ENCODE measurements at regions of chr1 and their contacts with region 1.

Region 1: DNA sequence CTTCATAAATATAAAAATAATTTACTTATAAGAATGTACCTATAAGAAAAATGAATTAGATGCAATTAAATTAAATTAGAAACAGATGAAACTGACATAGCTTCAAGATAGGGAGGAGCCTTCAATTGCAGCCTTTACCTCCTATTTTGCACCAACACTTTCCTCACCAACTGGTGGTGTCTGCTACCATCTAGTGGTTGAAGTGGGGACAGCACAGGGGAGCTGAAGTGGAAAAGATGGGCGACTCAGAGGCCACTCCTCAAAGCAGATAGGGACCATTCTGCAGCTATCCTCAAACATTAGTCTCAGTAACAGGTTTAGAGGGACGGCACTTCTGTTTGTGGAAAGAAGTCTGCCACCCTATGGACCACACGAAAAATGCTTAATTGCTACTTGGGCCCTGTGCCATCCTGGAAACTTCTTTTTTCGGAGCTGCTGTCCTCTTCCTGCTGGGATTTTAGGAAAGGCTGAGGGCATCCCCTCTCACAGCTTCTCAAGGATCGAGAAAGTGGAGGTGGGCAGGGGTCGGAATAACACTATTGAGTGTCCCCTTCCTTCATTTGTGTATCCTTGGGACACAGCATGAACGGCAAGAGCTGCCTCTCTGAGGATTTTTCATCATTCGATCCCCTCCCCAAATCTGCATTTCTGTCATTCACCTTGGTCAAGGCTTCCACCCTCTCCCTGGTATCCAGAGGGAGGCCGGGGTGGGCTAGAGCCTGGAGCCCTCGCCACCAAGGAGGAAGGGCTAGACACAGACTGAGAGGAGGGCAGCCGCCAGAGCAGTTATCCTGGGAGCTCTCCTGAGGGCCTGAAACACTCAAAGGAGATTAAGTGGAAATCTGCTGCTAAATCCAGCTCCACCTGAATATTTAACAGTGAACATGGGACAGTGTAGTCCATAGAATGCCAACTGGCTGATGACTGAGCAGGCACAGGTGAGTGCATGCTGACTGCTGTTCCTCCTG is 9.6 kb downstream of the PROK1 start:
- DNase-seq: peak; percentile 73 to 86 (median 76)
- H3K4me3 ChIP-seq: no peak overlapping the region
- H3K4me3 Mint-ChIP-seq: no peak overlapping the region
- H3K27ac ChIP-seq: no peak overlapping the region
- H3K27ac Mint-ChIP-seq: peak overlapping the region in 1 of 8 donors; percentile 23
- H3K4me1 ChIP-seq: no peaks in the 10 kb centered on the region
- H3K4me1 Mint-ChIP-seq: no peaks in the 10 kb centered on the region
- H3K27me3 ChIP-seq: no peaks in the 10 kb centered on the region
- H3K27me3 Mint-ChIP-seq: peaks cover 0 to 4% of the 10 kb centered on the region in 2 donors

Region 2: DNA sequence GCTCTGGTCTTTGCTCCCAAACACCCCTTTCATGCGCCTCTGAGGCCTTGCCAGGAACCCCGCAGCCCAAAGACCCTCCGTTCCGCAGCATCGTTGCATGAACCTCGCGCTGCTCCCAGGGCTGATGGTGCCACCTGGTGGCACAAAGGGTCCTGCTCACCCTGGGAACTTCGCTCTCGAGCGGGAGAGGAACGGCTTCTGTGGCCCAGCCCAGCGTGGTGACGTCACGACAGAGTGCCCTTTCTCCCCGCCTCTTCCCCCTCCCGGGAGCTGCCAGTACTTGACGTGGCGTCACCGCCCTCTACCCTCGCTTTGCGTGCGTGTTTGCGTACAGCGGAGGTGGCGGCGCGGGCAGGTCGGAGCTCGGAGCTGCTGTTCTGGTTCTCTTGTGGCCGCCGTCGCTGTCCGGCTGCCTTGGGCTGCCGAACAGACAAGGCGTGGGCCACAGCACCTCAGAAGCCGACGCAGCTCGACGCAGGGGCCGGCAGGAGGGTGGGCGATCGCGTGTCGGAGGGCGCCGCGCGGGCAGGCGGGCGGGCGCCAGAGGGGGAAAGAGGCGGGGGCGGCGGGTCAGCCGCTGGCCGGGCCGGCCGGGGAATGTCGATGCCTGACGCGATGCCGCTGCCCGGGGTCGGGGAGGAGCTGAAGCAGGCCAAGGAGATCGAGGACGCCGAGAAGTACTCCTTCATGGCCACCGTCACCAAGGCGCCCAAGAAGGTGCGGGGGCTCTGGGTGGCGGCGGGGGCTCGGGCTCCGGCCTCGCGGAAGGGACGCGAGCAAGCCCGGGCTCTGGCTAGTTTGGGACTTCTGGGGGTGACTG is 475.9 kb before region 1 on chr1 and contains the start of gene AHCYL1:
- CTCF ChIA-PET with region 1: no interaction called
- POLR2A ChIA-PET with region 1: no interaction called
- DNase-seq: peak; percentile 98 to 99 (median 99)
- H3K4me3 ChIP-seq: peak within 1 kb of the TSS; percentile 75
- H3K4me3 Mint-ChIP-seq: peak within 1 kb of the TSS; percentile 92 to 99 (median 97)
- H3K27ac ChIP-seq: peak within 1 kb of the TSS; percentile 77
- H3K27ac Mint-ChIP-seq: peak within 1 kb of the TSS; percentile 68 to 100 (median 99)
- H3K4me1 ChIP-seq: peaks cover 36% of the 10 kb centered on the region
- H3K4me1 Mint-ChIP-seq: peaks cover 38 to 46% (median 44%) of the 10 kb centered on the region in 3 donors
- H3K27me3 ChIP-seq: no peaks in the 10 kb centered on the region
- H3K27me3 Mint-ChIP-seq: peaks cover 0 to 2% of the 10 kb centered on the region in 2 donors
- total RNA-seq, gene AHCYL1: 56.9 to 59.9 TPM

Region 3: GRCh38 chr1:110196917-110197765 is 263.4 kb before region 1 on chr1:
- CTCF ChIA-PET with region 1: interaction called, 124 read pairs
- POLR2A ChIA-PET with region 1: no interaction called
- DNase-seq: peak; percentile 32 to 66 (median 47)
- H3K4me3 ChIP-seq: no peak overlapping the region
- H3K4me3 Mint-ChIP-seq: no peak overlapping the region
- H3K27ac ChIP-seq: no peak overlapping the region
- H3K27ac Mint-ChIP-seq: no peak overlapping the region
- H3K4me1 ChIP-seq: no peaks in the 10 kb centered on the region
- H3K4me1 Mint-ChIP-seq: peaks cover 0 to 2% (median 0%) of the 10 kb centered on the region in 3 donors
- H3K27me3 ChIP-seq: no peaks in the 10 kb centered on the region
- H3K27me3 Mint-ChIP-seq: no peaks in the 10 kb centered on the region

Region 4: GRCh38 chr1:110203021-110203661 is 257.4 kb before region 1 on chr1:
- CTCF ChIA-PET with region 1: interaction called, 124 read pairs
- POLR2A ChIA-PET with region 1: interaction called, 5 read pairs
- DNase-seq: peak; percentile 38 to 75 (median 67)
- H3K4me3 ChIP-seq: no peak overlapping the region
- H3K4me3 Mint-ChIP-seq: peak overlapping the region in 1 of 7 donors; percentile 32
- H3K27ac ChIP-seq: no peak overlapping the region
- H3K27ac Mint-ChIP-seq: peak overlapping the region; percentile 14 to 86 (median 74)
- H3K4me1 ChIP-seq: peaks cover 20% of the 10 kb centered on the region
- H3K4me1 Mint-ChIP-seq: peaks cover 14 to 26% (median 24%) of the 10 kb centered on the region in 3 donors
- H3K27me3 ChIP-seq: no peaks in the 10 kb centered on the region
- H3K27me3 Mint-ChIP-seq: peaks cover 0 to 2% of the 10 kb centered on the region in 2 donors

Region 5: GRCh38 chr1:110312188-110313121 is 148.1 kb before region 1 on chr1:
- CTCF ChIA-PET with region 1: interaction called, 17 read pairs
- POLR2A ChIA-PET with region 1: interaction called, 5 read pairs
- DNase-seq: peak; percentile 57 to 82 (median 62)
- H3K4me3 ChIP-seq: no peak overlapping the region
- H3K4me3 Mint-ChIP-seq: peak overlapping the region in 1 of 7 donors; percentile 54
- H3K27ac ChIP-seq: no peak overlapping the region
- H3K27ac Mint-ChIP-seq: no peak overlapping the region
- H3K4me1 ChIP-seq: no peaks in the 10 kb centered on the region
- H3K4me1 Mint-ChIP-seq: peaks cover 0 to 2% (median 0%) of the 10 kb centered on the region in 3 donors
- H3K27me3 ChIP-seq: no peaks in the 10 kb centered on the region
- H3K27me3 Mint-ChIP-seq: peaks cover 0 to 2% of the 10 kb centered on the region in 2 donors

Region 6: GRCh38 chr1:110338886-110339406 is 121.6 kb before region 1 on chr1 and contains the start of gene RBM15:
- CTCF ChIA-PET with region 1: interaction called, 18 read pairs
- POLR2A ChIA-PET with region 1: no interaction called
- DNase-seq: peak; percentile 93 to 99 (median 99)
- H3K4me3 ChIP-seq: peak within 1 kb of the TSS; percentile 80
- H3K4me3 Mint-ChIP-seq: no peak within 1 kb of the TSS
- H3K27ac ChIP-seq: peak within 1 kb of the TSS; percentile 97
- H3K27ac Mint-ChIP-seq: peak within 1 kb of the TSS in 2 of 8 donors; percentile 98
- H3K4me1 ChIP-seq: peaks cover 48% of the 10 kb centered on the region
- H3K4me1 Mint-ChIP-seq: peaks cover 53 to 63% (median 62%) of the 10 kb centered on the region in 3 donors
- H3K27me3 ChIP-seq: no peaks in the 10 kb centered on the region
- H3K27me3 Mint-ChIP-seq: no peaks in the 10 kb centered on the region
- total RNA-seq, gene RBM15: 53.9 to 54.0 TPM

Region 7: GRCh38 chr1:110360431-110360830 is 100.1 kb before region 1 on chr1:
- CTCF ChIA-PET with region 1: no interaction called
- POLR2A ChIA-PET with region 1: no interaction called
- DNase-seq: no peak
- H3K4me3 ChIP-seq: no peak overlapping the region
- H3K4me3 Mint-ChIP-seq: no peak overlapping the region
- H3K27ac ChIP-seq: no peak overlapping the region
- H3K27ac Mint-ChIP-seq: peak overlapping the region in 1 of 8 donors; percentile 64
- H3K4me1 ChIP-seq: no peaks in the 10 kb centered on the region
- H3K4me1 Mint-ChIP-seq: peaks cover 23 to 43% (median 38%) of the 10 kb centered on the region in 3 donors
- H3K27me3 ChIP-seq: no peaks in the 10 kb centered on the region
- H3K27me3 Mint-ChIP-seq: no peaks in the 10 kb centered on the region

Region 8: DNA sequence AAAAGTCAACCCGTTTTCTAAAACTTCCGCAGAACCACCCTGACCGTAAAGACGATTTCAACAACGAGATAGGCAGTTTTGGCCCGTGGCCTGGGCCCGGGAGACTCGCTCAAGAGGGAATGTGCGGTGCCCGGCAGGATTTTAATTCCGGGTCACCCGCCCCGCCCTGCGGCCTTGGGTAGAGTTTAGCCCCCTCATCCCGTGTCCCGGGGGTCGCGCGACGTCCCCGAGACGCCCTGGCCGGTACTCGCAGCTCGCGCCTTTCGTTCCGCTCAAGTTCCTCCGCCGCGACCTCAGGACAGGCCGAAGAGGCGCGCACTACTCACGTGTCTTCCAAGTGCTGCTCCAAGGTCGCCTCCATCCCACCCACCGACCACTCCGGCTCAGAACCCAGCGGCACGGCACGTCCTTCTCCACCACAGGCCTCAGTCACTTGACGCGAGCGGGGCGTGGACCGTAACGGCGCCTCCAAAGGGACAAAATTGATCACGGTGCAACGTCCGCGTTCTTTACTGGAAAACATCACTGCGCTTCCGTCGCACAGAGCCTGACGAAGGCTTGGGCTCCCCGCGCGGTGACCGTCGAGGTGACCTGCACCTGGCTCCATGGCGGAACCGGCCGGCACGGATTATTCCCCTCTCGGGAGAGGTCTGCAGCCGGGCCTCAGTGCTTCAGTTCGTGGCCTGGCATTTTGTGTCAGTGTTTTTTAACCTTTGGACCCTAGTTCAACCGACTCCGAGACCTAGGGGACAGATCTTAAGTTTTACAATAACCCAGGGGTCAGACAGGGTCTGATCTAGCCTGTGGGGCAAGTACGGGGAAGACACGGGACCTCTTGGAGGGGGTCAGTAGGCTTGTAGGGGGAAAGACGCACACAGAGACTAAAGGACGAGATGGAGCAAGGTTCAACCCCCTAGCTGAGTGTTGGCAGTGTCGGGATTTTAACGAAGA is 53.0 kb before region 1 on chr1 and contains the start of gene LAMTOR5:
- CTCF ChIA-PET with region 1: interaction called, 27 read pairs
- POLR2A ChIA-PET with region 1: no interaction called
- DNase-seq: peak; percentile 85 to 93 (median 87)
- H3K4me3 ChIP-seq: peak within 1 kb of the TSS; percentile 100
- H3K4me3 Mint-ChIP-seq: peak within 1 kb of the TSS; percentile 95 to 100 (median 99)
- H3K27ac ChIP-seq: peak within 1 kb of the TSS; percentile 97
- H3K27ac Mint-ChIP-seq: peak within 1 kb of the TSS; percentile 90 to 100 (median 99)
- H3K4me1 ChIP-seq: peaks cover 22% of the 10 kb centered on the region
- H3K4me1 Mint-ChIP-seq: peaks cover 24 to 33% (median 31%) of the 10 kb centered on the region in 3 donors
- H3K27me3 ChIP-seq: no peaks in the 10 kb centered on the region
- H3K27me3 Mint-ChIP-seq: no peaks in the 10 kb centered on the region
- total RNA-seq, gene LAMTOR5: 148 to 157 TPM

Region 9: DNA sequence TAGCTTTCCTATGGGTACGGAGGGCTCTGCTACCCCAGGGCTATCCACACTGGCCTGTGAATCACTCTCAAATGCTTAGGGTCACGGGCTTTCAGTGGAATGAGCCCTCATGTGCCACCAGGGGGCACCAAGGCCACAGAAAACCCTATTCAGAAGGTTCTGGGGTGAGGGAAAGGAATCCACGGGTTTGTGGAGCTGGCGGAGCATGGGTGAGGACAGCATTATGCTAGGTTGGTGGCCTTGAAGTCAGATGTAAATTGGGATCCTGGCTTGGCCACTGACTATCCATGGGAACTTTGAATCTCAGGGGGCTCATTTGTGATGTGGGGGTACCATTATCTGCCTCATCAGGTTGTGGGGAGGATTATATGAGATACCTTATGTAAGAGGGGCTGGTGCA is 48.0 kb before region 1 on chr1:
- CTCF ChIA-PET with region 1: interaction called, 27 read pairs
- POLR2A ChIA-PET with region 1: no interaction called
- DNase-seq: peak; percentile 26 to 67 (median 41)
- H3K4me3 ChIP-seq: no peak overlapping the region
- H3K4me3 Mint-ChIP-seq: peak overlapping the region in 1 of 7 donors; percentile 23
- H3K27ac ChIP-seq: peak overlapping the region; percentile 25
- H3K27ac Mint-ChIP-seq: peak overlapping the region in 3 of 8 donors; percentile 2 to 68 (median 63)
- H3K4me1 ChIP-seq: peaks cover 10% of the 10 kb centered on the region
- H3K4me1 Mint-ChIP-seq: peaks cover 9 to 19% (median 12%) of the 10 kb centered on the region in 3 donors
- H3K27me3 ChIP-seq: no peaks in the 10 kb centered on the region
- H3K27me3 Mint-ChIP-seq: no peaks in the 10 kb centered on the region

Region 10: DNA sequence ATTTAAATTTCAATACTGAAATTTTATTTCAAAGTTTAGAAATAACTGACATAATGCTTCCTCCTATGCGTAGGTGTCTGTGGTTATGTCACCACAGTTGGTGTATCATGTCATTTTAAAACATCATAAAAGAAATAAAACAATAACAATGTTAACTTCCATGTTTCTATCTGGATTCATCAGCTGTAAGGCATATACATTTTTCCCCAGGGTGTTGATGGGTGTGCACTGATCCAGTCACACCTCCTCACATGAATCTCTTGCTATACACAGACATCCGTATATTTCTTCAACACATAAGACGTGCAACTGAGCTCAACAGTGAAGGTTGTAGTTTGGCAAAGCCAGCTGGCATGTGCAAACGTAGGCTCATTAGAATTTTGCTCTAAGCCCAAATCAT is 208.0 kb after region 1 on chr1:
- CTCF ChIA-PET with region 1: no interaction called
- POLR2A ChIA-PET with region 1: no interaction called
- DNase-seq: peak in 3 of 5 donors; percentile 42 to 53 (median 46)
- H3K4me3 ChIP-seq: peak overlapping the region; percentile 0
- H3K4me3 Mint-ChIP-seq: peak overlapping the region; percentile 80 to 100 (median 87)
- H3K27ac ChIP-seq: peak overlapping the region; percentile 56
- H3K27ac Mint-ChIP-seq: peak overlapping the region in 7 of 8 donors; percentile 87 to 95 (median 93)
- H3K4me1 ChIP-seq: peaks cover 67% of the 10 kb centered on the region
- H3K4me1 Mint-ChIP-seq: peaks cover 25 to 43% (median 31%) of the 10 kb centered on the region in 3 donors
- H3K27me3 ChIP-seq: no peaks in the 10 kb centered on the region
- H3K27me3 Mint-ChIP-seq: peaks cover 0 to 5% of the 10 kb centered on the region in 2 donors

Measured in CD8-positive, alpha-beta memory T cell (primary cell).